ENCODE measurements at regions of chr2 and their contacts with region 1.

Region 1: GRCh38 chr2:10448208-10448645 is at the start of gene ODC1:
- DNase-seq: peak; percentile 97
- ATAC-seq: peak; percentile 74
- H3K4me3 Mint-ChIP-seq: peak within 1 kb of the TSS; percentile 85
- H3K27ac Mint-ChIP-seq: peak within 1 kb of the TSS; percentile 95
- H3K4me1 Mint-ChIP-seq: peaks cover 51% of the 10 kb centered on the region
- H3K27me3 Mint-ChIP-seq: no peaks in the 10 kb centered on the region
- total RNA-seq, gene ODC1: 158 to 170 TPM

Region 2: GRCh38 chr2:9326975-9327374 is 1121.3 kb before region 1 on chr2:
- CTCF ChIA-PET with region 1: no interaction called
- POLR2A ChIA-PET with region 1: no interaction called
- intact Hi-C with region 1: no loop called
- DNase-seq: no peak
- ATAC-seq: no peak
- H3K4me3 Mint-ChIP-seq: no peak overlapping the region
- H3K27ac Mint-ChIP-seq: no peak overlapping the region
- H3K4me1 Mint-ChIP-seq: no peaks in the 10 kb centered on the region
- H3K27me3 Mint-ChIP-seq: peaks cover 1% of the 10 kb centered on the region

Region 3: DNA sequence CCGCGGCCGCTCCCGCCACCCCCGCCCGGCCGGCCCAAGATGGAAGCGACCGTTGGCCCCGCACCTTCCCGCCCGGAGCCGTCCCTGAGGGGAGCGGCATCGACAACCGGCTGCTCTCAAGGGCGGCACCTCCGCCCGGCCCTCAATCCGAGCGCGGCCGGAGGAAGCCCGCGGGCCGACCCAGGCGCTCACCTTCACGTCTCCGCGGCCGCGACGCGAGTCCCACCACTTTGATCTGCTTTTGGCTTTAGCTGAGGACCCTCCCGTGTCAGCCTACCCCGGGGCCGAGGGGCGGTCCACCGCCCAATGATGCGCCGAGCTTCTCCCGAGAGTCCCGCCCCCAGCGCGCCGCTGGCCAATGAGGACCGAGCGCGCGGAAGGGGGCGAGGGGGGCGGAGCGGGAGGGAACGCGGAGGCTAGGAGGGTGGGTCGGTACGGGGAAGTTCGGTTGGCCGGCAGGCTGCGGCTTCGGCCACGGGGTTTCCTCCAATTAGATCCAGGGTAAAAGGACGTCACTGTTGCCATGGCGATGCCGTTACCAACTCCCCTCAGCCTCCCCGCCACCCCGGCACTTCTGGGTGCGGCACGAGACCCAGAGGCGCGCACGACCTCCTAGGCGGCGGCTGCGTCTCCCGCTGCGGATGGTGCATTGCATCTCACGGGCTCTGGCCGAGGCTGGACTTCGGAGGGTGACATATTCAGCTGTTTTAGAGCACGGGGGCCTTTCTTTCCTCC is 817.3 kb before region 1 on chr2 and contains the start of gene YWHAQ:
- CTCF ChIA-PET with region 1: no interaction called
- POLR2A ChIA-PET with region 1: no interaction called
- intact Hi-C with region 1: loop called in 1 of 2 experiments (anchors 1 kb)
- DNase-seq: peak; percentile 97
- ATAC-seq: peak; percentile 89
- H3K4me3 Mint-ChIP-seq: peak within 1 kb of the TSS; percentile 99
- H3K27ac Mint-ChIP-seq: peak within 1 kb of the TSS; percentile 95
- H3K4me1 Mint-ChIP-seq: peaks cover 45% of the 10 kb centered on the region
- H3K27me3 Mint-ChIP-seq: no peaks in the 10 kb centered on the region
- total RNA-seq, gene YWHAQ: 370 to 508 TPM

Region 4: GRCh38 chr2:10043906-10044601 is 404.2 kb before region 1 on chr2:
- CTCF ChIA-PET with region 1: no interaction called
- POLR2A ChIA-PET with region 1: no interaction called
- intact Hi-C with region 1: loop called in 1 of 2 experiments (anchors 1 kb)
- DNase-seq: peak; percentile 95
- ATAC-seq: peak; percentile 81
- H3K4me3 Mint-ChIP-seq: peak overlapping the region; percentile 66
- H3K27ac Mint-ChIP-seq: peak overlapping the region; percentile 78
- H3K4me1 Mint-ChIP-seq: peaks cover 12% of the 10 kb centered on the region
- H3K27me3 Mint-ChIP-seq: peaks cover 3% of the 10 kb centered on the region

Region 5: GRCh38 chr2:10408649-10409579 is 39.3 kb before region 1 on chr2:
- CTCF ChIA-PET with region 1: interaction called, 12 read pairs
- POLR2A ChIA-PET with region 1: interaction called, 9 read pairs
- intact Hi-C with region 1: loop called (anchors 1 to 5 kb)
- DNase-seq: peak; percentile 91
- ATAC-seq: peak; percentile 65
- H3K4me3 Mint-ChIP-seq: peak overlapping the region; percentile 60
- H3K27ac Mint-ChIP-seq: peak overlapping the region; percentile 99
- H3K4me1 Mint-ChIP-seq: peaks cover 63% of the 10 kb centered on the region
- H3K27me3 Mint-ChIP-seq: no peaks in the 10 kb centered on the region

Region 6: GRCh38 chr2:10532638-10533101 is 84.4 kb after region 1 on chr2:
- CTCF ChIA-PET with region 1: no interaction called
- POLR2A ChIA-PET with region 1: no interaction called
- intact Hi-C with region 1: no loop called
- DNase-seq: no peak
- ATAC-seq: no peak
- H3K4me3 Mint-ChIP-seq: no peak overlapping the region
- H3K27ac Mint-ChIP-seq: no peak overlapping the region
- H3K4me1 Mint-ChIP-seq: peaks cover 3% of the 10 kb centered on the region
- H3K27me3 Mint-ChIP-seq: peaks cover 4% of the 10 kb centered on the region

Region 7: GRCh38 chr2:10688921-10689807 is 240.9 kb after region 1 on chr2:
- CTCF ChIA-PET with region 1: no interaction called
- POLR2A ChIA-PET with region 1: no interaction called
- intact Hi-C with region 1: loop called in 1 of 2 experiments (anchors 1 kb)
- DNase-seq: no peak
- ATAC-seq: peak; percentile 19
- H3K4me3 Mint-ChIP-seq: no peak overlapping the region
- H3K27ac Mint-ChIP-seq: no peak overlapping the region
- H3K4me1 Mint-ChIP-seq: peaks cover 7% of the 10 kb centered on the region
- H3K27me3 Mint-ChIP-seq: no peaks in the 10 kb centered on the region

Region 8: DNA sequence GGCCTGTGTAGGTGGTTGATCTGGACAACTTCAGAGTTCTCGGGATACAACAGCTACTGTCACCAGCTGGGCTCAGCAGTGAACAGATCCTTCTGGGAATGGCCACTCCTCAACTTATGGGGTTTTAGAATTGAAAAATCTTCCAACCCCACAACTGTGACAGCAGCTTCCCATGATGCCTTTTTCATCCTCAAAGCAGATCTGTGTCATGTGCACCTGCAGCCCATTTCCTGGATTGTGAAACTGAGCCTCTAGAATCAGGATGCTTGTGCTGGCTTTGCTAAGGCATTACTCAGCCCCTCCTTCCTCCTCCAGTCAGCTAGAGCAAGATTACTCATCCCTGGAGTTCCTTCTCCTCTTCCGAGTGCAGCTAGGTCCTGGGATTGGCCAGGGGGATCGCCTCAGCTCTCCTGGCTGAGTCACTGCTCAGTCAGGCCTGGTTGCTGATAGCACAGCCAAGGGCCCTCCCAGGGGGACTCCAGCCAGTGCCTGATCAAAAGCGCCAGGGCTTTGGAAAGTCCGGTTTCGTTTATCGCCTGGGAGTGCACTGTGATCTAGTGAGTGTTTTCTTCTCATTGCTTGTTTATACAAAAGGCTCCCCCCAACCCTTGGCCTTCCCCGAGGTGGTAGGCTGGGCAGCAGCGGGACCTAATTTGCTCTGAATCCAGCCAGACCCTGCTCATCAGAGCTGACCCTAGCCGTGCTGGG is 1295.8 kb after region 1 on chr2:
- CTCF ChIA-PET with region 1: no interaction called
- POLR2A ChIA-PET with region 1: no interaction called
- intact Hi-C with region 1: loop called in 1 of 2 experiments (anchors 5 kb)
- DNase-seq: peak; percentile 90
- ATAC-seq: peak; percentile 83
- H3K4me3 Mint-ChIP-seq: peak overlapping the region; percentile 34
- H3K27ac Mint-ChIP-seq: peak overlapping the region; percentile 73
- H3K4me1 Mint-ChIP-seq: peaks cover 54% of the 10 kb centered on the region
- H3K27me3 Mint-ChIP-seq: no peaks in the 10 kb centered on the region

Measured in activated CD4-positive, alpha-beta T cell treated with anti-CD3 and anti-CD28 coated beads for 36 hours (primary cell).